MCF 10A (cell line): ENCODE measurements at regions of chr10 and their contacts with region 1.

Region 1: GRCh38 chr10:14536241-14537213 is 205.8 kb upstream of the FRMD4A start:
- DNase-seq: peak; percentile 82
- H3K4me3 Mint-ChIP-seq: no peak overlapping the region
- H3K27ac Mint-ChIP-seq: no peak overlapping the region
- H3K4me1 Mint-ChIP-seq: no peaks in the 10 kb centered on the region
- H3K27me3 Mint-ChIP-seq: no peaks in the 10 kb centered on the region
- CTCF ChIP-seq: peak; percentile 74

Region 2: GRCh38 chr10:14032395-14032998 is 504.0 kb before region 1 on chr10:
- CTCF ChIA-PET with region 1: no interaction called
- POLR2A ChIA-PET with region 1: no interaction called
- intact Hi-C with region 1: no loop called
- DNase-seq: no peak
- H3K4me3 Mint-ChIP-seq: no peak overlapping the region
- H3K27ac Mint-ChIP-seq: no peak overlapping the region
- H3K4me1 Mint-ChIP-seq: no peaks in the 10 kb centered on the region
- H3K27me3 Mint-ChIP-seq: peaks cover 10% of the 10 kb centered on the region
- CTCF ChIP-seq: peak; percentile 45

Region 3: GRCh38 chr10:14524691-14525324 is 11.7 kb before region 1 on chr10:
- CTCF ChIA-PET with region 1: interaction called, 10 read pairs
- POLR2A ChIA-PET with region 1: no interaction called
- intact Hi-C with region 1: no loop called
- DNase-seq: no peak
- H3K4me3 Mint-ChIP-seq: no peak overlapping the region
- H3K27ac Mint-ChIP-seq: no peak overlapping the region
- H3K4me1 Mint-ChIP-seq: no peaks in the 10 kb centered on the region
- H3K27me3 Mint-ChIP-seq: no peaks in the 10 kb centered on the region
- CTCF ChIP-seq: no peak

Region 4: GRCh38 chr10:14553448-14553847 is 16.9 kb after region 1 on chr10:
- CTCF ChIA-PET with region 1: interaction called, 12 read pairs
- POLR2A ChIA-PET with region 1: interaction called, 3 read pairs
- intact Hi-C with region 1: no loop called
- DNase-seq: peak; percentile 38
- H3K4me3 Mint-ChIP-seq: no peak overlapping the region
- H3K27ac Mint-ChIP-seq: no peak overlapping the region
- H3K4me1 Mint-ChIP-seq: peaks cover 15% of the 10 kb centered on the region
- H3K27me3 Mint-ChIP-seq: no peaks in the 10 kb centered on the region
- CTCF ChIP-seq: no peak

Region 5: DNA sequence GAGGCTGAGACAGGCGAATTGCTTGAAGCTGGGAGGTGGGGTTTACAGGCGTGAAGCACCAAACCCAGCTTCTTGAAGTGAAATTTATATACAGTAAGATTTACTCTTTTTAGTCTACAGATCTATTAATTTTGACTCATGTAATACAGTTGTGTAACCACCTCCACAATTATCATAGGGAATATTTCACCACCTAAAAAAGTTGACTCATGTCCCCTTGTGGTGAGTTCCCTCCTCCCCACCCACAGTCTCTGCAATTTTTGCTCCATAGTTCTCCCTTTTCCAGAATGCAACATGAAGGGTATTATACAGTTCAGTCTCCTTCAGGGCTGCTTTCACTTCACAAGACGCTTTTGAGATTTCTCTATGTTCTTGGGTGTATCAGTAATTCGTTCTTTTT is 81.3 kb after region 1 on chr10:
- CTCF ChIA-PET with region 1: interaction called, 5 read pairs
- POLR2A ChIA-PET with region 1: no interaction called
- intact Hi-C with region 1: loop called (anchors 5 kb)
- DNase-seq: peak; percentile 79
- H3K4me3 Mint-ChIP-seq: no peak overlapping the region
- H3K27ac Mint-ChIP-seq: peak overlapping the region; percentile 62
- H3K4me1 Mint-ChIP-seq: peaks cover 12% of the 10 kb centered on the region
- H3K27me3 Mint-ChIP-seq: no peaks in the 10 kb centered on the region
- CTCF ChIP-seq: no peak

Region 6: GRCh38 chr10:14812271-14812670 is 275.7 kb after region 1 on chr10:
- CTCF ChIA-PET with region 1: interaction called, 10 read pairs
- POLR2A ChIA-PET with region 1: no interaction called
- intact Hi-C with region 1: no loop called
- DNase-seq: no peak
- H3K4me3 Mint-ChIP-seq: no peak overlapping the region
- H3K27ac Mint-ChIP-seq: no peak overlapping the region
- H3K4me1 Mint-ChIP-seq: no peaks in the 10 kb centered on the region
- H3K27me3 Mint-ChIP-seq: no peaks in the 10 kb centered on the region
- CTCF ChIP-seq: no peak

Region 7: DNA sequence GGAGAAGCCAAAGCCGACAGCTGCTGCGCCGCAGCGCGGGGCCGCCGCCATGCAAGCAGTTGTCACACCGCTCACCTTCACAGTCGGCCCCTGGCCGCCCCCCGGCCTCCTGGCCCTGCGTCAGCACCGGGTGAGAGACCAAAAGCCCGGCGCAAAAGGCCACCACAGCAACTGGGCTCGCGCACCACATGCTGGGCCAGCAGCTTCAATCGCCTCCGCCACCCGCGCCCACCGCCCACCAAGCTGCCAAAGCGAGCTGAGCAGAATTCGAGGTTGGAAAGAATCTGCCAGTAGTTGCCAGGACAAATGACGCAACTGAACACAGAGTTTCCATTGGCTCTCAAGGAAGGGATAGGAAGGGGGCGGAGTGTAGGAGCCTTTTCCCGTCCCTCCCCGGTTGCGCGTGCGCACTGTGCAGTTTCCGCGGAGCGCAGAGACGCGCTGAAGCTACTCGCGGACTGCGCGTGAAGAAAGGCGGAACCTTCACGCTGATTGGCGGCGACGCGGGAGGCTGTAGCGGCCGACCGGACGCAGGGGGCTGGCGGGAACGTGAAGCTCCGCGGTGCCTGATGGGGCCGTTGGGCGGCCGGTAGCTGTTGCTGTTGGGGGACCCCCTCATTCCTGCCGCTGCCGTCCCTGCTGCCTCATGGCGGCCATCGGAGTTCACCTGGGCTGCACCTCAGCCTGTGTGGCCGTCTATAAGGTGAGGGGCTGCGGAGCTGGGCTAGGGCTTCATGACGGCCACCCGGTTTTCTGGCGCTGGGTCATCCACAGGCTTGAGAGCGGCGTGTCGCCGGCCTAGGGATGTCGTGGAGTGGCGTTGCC is 301.4 kb after region 1 on chr10 and contains the starts of genes CDNF, HSPA14 and MSANTD7:
- CTCF ChIA-PET with region 1: interaction called, 30 read pairs
- POLR2A ChIA-PET with region 1: interaction called, 6 read pairs
- intact Hi-C with region 1: loop called (anchors 5 kb)
- DNase-seq: peak; percentile 99
- H3K4me3 Mint-ChIP-seq: peak within 1 kb of the TSS; percentile 76
- H3K27ac Mint-ChIP-seq: peak within 1 kb of the TSS; percentile 91
- H3K4me1 Mint-ChIP-seq: no peaks in the 10 kb centered on the region
- H3K27me3 Mint-ChIP-seq: no peaks in the 10 kb centered on the region
- CTCF ChIP-seq: no peak
- total RNA-seq, gene CDNF: 1.9 and 2.9 TPM in 2 replicates
- total RNA-seq, gene HSPA14: 12.1 and 14.0 TPM in 2 replicates
- total RNA-seq, gene MSANTD7: 17.2 and 18.1 TPM in 2 replicates

Region 8: DNA sequence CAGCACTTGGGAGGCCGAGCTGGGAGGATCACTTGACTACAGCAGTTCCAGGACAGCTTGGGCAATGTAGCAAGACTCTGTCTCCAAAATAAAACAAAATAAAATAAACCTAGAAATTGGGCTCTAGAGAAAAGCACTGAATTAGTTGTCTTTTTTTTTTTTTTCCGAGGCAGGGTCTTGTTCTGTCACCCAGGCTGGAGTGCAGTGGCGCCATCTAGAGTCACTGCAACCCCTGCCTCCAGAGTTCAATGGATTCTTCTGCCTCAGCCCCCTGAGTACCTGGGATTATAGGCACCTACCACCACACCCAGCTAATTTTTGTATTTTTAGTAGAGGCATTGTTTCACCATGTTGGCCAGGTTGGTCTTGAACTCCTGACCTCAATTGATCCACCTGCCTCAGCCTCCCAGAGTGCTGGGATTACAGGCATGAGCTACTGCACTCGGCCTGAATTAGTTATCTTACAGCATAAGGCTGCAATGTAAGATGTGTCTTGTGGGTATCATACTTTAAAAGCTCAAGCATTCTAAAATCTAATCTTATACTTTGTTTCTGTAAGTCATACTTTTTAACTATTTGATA is 435.4 kb after region 1 on chr10:
- CTCF ChIA-PET with region 1: no interaction called
- POLR2A ChIA-PET with region 1: no interaction called
- intact Hi-C with region 1: loop called (anchors 10 kb)
- DNase-seq: peak; percentile 42
- H3K4me3 Mint-ChIP-seq: no peak overlapping the region
- H3K27ac Mint-ChIP-seq: no peak overlapping the region
- H3K4me1 Mint-ChIP-seq: peaks cover 9% of the 10 kb centered on the region
- H3K27me3 Mint-ChIP-seq: no peaks in the 10 kb centered on the region
- CTCF ChIP-seq: peak; percentile 47

Region 9: DNA sequence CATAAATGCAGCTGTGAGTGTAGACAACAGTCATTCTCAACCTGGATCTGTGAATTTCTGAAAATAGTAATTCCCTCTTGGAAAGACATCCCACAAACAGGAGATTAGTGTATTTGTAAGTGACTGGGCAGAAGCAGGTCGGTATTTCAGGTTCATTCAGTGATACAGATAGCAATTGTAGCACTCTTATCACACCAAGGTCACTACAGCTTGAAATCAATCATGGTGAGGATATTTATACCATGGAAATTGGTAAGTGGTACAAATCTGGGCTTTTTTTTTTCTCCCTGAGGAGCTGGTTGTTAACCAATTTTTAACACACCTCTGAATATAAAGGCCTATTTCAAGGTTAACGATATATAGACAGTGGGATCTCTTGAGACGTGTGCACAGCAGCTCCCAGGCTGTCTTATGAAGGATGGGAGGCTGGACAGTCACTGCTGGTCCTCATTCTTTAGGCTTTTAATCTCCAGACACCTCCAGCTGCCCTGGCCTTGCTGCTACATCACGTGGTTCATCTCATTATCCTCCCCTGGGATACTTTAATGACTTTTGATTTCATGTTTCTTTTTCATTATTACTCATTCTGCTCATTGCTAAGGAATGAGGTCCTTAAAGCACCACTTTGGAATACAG is 1096.0 kb after region 1 on chr10:
- CTCF ChIA-PET with region 1: no interaction called
- POLR2A ChIA-PET with region 1: no interaction called
- intact Hi-C with region 1: no loop called
- DNase-seq: no peak
- H3K4me3 Mint-ChIP-seq: no peak overlapping the region
- H3K27ac Mint-ChIP-seq: no peak overlapping the region
- H3K4me1 Mint-ChIP-seq: no peaks in the 10 kb centered on the region
- H3K27me3 Mint-ChIP-seq: peaks cover 57% of the 10 kb centered on the region
- CTCF ChIP-seq: no peak